Activated CD8-positive, alpha-beta T cell treated with anti-CD3 and anti-CD28 coated beads for 36 hours (primary cell): ENCODE measurements at regions of chr5 and their contacts with region 1.

Region 1: GRCh38 chr5:138824924-138825863 is 49.9 kb downstream of the LRRTM2 start:
- DNase-seq: peak; percentile 47
- ATAC-seq: peak; percentile 90
- H3K4me3 Mint-ChIP-seq: no peak overlapping the region
- H3K27ac Mint-ChIP-seq: peak overlapping the region; percentile 17
- H3K4me1 Mint-ChIP-seq: peaks cover 7% of the 10 kb centered on the region
- H3K27me3 Mint-ChIP-seq: peaks cover 14% of the 10 kb centered on the region
- CTCF ChIP-seq: peak; percentile 71

Region 2: DNA sequence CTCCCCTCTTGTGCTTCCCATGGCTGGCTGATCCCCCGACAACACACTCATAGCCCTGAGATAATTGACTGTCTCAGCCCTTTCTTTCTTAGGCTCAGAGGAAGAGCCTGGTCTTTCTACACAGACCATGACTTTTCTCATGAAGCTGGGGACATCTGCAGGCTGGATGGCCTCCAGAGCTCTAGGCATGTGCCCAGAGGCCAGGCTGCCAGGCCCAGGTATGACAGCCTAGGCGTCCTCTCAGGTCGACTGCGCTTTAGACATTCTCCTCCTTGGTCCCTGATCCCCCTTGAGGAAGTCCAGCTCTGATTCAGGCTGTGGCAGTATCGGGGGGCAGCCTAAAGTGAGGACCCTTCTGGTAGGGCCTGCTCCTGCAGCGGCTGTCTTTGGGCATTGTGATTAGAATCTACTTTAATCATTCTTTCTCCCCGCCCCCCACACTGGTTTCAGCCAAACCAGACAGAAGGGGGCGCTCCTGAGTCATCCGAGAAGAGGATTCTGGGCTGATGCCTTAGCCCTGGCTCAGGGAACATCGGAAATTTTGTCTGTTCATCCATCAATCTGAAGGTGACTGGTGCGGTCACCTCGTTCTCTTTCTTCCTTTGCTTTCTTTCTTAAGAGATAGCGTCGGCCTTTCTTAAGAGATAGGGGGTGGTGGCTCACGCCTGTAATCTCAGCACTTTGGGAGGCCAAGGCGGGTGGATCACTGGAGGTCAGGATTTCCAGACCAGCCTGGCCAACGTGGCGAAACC is 183.5 kb before region 1 on chr5:
- CTCF ChIA-PET with region 1: interaction called, 13 read pairs
- POLR2A ChIA-PET with region 1: no interaction called
- intact Hi-C with region 1: no loop called
- DNase-seq: peak; percentile 88
- ATAC-seq: peak; percentile 91
- H3K4me3 Mint-ChIP-seq: no peak overlapping the region
- H3K27ac Mint-ChIP-seq: no peak overlapping the region
- H3K4me1 Mint-ChIP-seq: no peaks in the 10 kb centered on the region
- H3K27me3 Mint-ChIP-seq: peaks cover 58% of the 10 kb centered on the region
- CTCF ChIP-seq: peak; percentile 85

Region 3: GRCh38 chr5:138789771-138790242 is 35.4 kb before region 1 on chr5:
- CTCF ChIA-PET with region 1: interaction called, 11 read pairs
- POLR2A ChIA-PET with region 1: no interaction called
- intact Hi-C with region 1: no loop called
- DNase-seq: peak; percentile 13
- ATAC-seq: peak; percentile 56
- H3K4me3 Mint-ChIP-seq: no peak overlapping the region
- H3K27ac Mint-ChIP-seq: no peak overlapping the region
- H3K4me1 Mint-ChIP-seq: peaks cover 30% of the 10 kb centered on the region
- H3K27me3 Mint-ChIP-seq: peaks cover 55% of the 10 kb centered on the region
- CTCF ChIP-seq: peak; percentile 70

Region 4: GRCh38 chr5:138844812-138845513 is 19.8 kb after region 1 on chr5:
- CTCF ChIA-PET with region 1: interaction called, 10 read pairs
- POLR2A ChIA-PET with region 1: no interaction called
- intact Hi-C with region 1: no loop called
- DNase-seq: no peak
- ATAC-seq: no peak
- H3K4me3 Mint-ChIP-seq: no peak overlapping the region
- H3K27ac Mint-ChIP-seq: no peak overlapping the region
- H3K4me1 Mint-ChIP-seq: peaks cover 6% of the 10 kb centered on the region
- H3K27me3 Mint-ChIP-seq: no peaks in the 10 kb centered on the region
- CTCF ChIP-seq: no peak

Region 5: GRCh38 chr5:138850865-138851435 is 25.8 kb after region 1 on chr5:
- CTCF ChIA-PET with region 1: interaction called, 12 read pairs
- POLR2A ChIA-PET with region 1: no interaction called
- intact Hi-C with region 1: no loop called
- DNase-seq: no peak
- ATAC-seq: no peak
- H3K4me3 Mint-ChIP-seq: no peak overlapping the region
- H3K27ac Mint-ChIP-seq: no peak overlapping the region
- H3K4me1 Mint-ChIP-seq: peaks cover 11% of the 10 kb centered on the region
- H3K27me3 Mint-ChIP-seq: peaks cover 6% of the 10 kb centered on the region
- CTCF ChIP-seq: no peak

Region 6: GRCh38 chr5:139262742-139263445 is 437.7 kb after region 1 on chr5:
- CTCF ChIA-PET with region 1: interaction called, 7 read pairs
- POLR2A ChIA-PET with region 1: no interaction called
- intact Hi-C with region 1: loop called (anchors 10 kb)
- DNase-seq: peak; percentile 86
- ATAC-seq: peak; percentile 100
- H3K4me3 Mint-ChIP-seq: no peak overlapping the region
- H3K27ac Mint-ChIP-seq: no peak overlapping the region
- H3K4me1 Mint-ChIP-seq: peaks cover 10% of the 10 kb centered on the region
- H3K27me3 Mint-ChIP-seq: no peaks in the 10 kb centered on the region
- CTCF ChIP-seq: peak; percentile 79